ENCODE measurements at regions of chr11 and their contacts with region 1.

Region 1: DNA sequence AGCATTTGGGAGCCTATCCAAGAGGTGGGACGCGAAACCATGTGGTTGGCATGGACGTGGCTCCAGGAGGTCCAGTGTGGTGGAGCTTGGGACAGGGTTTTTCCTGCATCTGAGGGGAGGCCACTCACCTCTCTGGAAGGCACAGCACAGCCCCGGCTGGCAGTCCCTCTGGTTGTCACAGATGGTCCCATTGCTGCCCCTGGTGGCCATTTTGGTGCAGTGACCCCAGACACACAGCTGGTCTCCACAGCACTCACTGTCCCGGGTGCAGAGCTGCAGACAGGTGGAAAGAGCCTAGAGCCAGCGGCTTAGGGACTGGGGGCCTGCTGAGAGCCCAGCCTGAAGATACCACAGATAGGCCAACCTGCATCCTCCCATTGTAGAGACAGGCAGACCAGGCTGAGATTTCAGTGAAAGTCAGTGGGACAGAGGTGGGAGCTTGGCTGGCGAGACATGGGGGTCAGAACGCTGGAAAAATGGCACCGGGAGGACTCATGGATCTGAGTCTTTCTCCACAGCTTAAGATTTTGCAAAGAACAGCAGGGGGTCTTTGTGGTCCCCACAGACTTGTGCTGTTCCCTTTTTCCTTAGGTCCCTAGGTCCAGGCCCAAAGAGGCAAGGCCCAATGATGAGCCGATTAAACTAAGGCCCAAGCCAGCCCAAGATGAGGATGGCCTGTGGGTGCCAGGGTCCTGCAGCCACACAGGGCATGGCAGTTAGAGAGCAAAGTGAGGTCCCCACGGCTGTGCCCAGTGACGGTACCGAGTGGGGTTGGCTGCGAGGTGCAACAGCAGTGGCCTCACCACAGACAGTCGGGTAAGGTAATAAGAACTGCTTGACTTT is 41.4 kb downstream of the DKK3 start:
- DNase-seq: peak in 1 of 2 donors; percentile 87
- H3K4me3 ChIP-seq: no peak overlapping the region
- H3K27ac ChIP-seq: no peak overlapping the region
- H3K4me1 ChIP-seq: peaks cover 2 to 31% of the 10 kb centered on the region in 2 donors
- H3K27me3 ChIP-seq: no peaks in the 10 kb centered on the region
- CTCF ChIP-seq: peak; percentile 66 to 78 (median 67)

Region 2: DNA sequence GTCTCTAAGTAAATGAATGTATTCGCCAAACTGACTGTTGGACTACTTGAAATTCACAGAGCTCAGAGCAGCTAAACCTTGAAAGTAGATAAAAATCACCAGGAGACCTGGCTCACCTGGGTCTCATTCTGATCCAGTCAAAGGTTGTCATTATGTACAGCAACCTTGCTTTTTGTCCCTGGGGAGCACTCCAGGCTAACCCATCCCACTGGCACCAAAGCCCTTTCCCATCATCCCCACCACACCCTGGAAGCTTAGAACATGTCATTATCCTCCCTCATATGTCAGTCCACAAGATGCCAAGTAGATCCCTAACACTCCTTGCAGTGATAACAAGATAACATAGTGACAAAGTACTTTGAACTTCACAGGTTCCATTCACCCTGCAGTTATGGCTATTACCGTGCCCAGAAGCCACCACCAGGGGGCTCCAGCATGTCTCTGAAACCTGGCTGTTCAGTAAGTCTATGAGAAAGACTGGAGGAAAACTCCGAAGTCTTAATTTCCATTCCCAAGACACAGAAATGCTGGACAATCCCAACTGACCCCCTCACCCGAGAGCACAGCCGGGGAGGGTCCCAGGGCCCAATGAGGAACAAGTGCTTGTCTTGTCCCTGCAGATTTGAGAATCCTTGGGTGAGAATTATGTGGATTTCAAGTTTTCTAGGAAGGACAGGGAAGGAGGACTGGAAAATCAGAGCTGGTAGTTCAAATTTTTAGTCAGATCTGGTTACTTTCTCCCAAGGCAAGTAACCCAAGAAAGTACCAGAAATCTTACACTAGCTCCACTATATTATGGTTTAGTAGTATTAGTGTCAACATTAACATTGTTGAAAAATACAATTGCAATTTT is 168.2 kb before region 1 on chr11:
- intact Hi-C with region 1: no loop called
- DNase-seq: peak; percentile 51 to 93
- H3K4me3 ChIP-seq: no peak overlapping the region
- H3K27ac ChIP-seq: no peak overlapping the region
- H3K4me1 ChIP-seq: peaks cover 2 to 3% of the 10 kb centered on the region in 2 donors
- H3K27me3 ChIP-seq: no peaks in the 10 kb centered on the region
- CTCF ChIP-seq: peak; percentile 77 to 89 (median 80)

Region 3: GRCh38 chr11:11931461-11932055 is 35.5 kb before region 1 on chr11:
- intact Hi-C with region 1: loop called (anchors 5 kb)
- DNase-seq: no peak
- H3K4me3 ChIP-seq: no peak overlapping the region
- H3K27ac ChIP-seq: no peak overlapping the region
- H3K4me1 ChIP-seq: no peaks in the 10 kb centered on the region
- H3K27me3 ChIP-seq: no peaks in the 10 kb centered on the region
- CTCF ChIP-seq: peak; percentile 69 to 74 (median 71)

Region 4: DNA sequence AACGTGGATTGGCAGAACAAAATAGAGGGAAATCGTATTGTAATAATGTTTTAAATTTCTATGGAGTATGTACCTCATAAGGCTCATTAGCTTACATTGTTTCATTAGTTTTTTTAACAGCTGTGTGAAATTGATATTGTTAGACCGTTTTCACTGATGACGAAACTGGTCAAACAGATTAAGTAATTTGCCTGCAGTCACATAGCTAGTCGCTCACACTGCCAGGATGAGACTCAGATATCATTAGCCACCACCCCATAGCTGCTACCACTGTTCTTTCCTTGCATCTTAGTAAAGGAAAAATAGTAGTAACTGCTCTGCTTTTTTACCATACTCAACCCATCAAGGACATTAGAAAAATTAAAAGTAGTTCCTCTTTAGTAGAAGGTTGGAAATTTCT is 22.6 kb before region 1 on chr11:
- intact Hi-C with region 1: no loop called
- DNase-seq: no peak
- H3K4me3 ChIP-seq: no peak overlapping the region
- H3K27ac ChIP-seq: no peak overlapping the region
- H3K4me1 ChIP-seq: no peaks in the 10 kb centered on the region
- H3K27me3 ChIP-seq: no peaks in the 10 kb centered on the region
- CTCF ChIP-seq: no peak

Region 5: DNA sequence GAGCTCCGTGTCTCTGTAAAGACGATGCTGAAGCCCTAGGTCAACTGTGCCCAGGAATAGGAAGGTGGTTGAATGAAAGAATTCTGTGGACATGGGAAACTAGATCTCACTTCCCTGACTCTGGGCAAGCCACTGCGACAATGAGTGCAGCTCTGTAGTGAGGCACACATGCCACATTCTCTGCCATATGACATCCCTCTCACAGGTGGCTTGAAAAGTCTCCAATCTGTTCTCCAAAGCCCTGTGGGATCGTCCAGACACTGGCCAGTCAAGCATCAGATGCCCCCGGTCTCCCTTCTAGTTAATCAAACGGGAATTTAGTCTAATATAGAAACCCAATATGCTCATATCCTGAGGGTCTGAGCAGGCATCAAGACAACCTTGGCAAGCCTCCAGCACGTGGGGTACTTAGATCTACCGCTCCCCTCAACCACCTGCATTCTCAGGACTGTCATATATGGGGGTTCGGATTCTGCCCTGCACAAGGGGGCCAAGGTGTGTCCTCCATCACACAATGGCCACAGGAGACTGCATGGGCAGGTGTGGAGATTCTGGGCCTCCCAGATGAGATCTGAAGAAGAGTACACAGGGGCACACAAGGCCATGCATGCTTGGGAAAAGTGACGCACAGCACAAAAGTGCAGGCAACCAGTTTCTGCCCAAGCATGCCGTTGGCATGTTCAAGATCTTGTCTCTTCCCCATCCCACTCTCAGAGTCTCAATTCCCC is 29.4 kb after region 1 on chr11:
- intact Hi-C with region 1: loop called (anchors 2 kb)
- DNase-seq: peak in 1 of 2 donors; percentile 61
- H3K4me3 ChIP-seq: no peak overlapping the region
- H3K27ac ChIP-seq: peak overlapping the region; percentile 57 to 67
- H3K4me1 ChIP-seq: peaks cover 0 to 3% of the 10 kb centered on the region in 2 donors
- H3K27me3 ChIP-seq: no peaks in the 10 kb centered on the region
- CTCF ChIP-seq: no peak

Region 6: DNA sequence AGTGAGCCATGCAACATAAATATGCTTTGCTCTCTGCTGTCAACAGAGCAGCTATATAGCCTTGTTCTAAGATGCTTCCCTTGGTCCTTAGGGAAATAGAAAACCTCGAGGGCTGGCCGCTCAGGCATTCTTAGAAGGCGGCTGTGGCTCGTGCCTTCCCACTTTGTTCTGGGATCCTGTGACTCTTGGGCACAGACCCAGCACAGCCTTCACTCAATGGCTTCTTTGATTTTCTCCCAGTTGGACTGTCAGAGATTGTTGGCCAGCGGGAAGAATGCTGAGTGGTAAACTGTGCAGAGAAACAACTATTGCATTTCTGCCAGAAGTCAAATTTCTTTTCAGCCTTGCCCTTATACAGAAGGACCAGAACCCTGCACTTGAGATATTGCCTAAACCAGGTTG is 133.8 kb after region 1 on chr11:
- intact Hi-C with region 1: no loop called
- DNase-seq: no peak
- H3K4me3 ChIP-seq: no peak overlapping the region
- H3K27ac ChIP-seq: no peak overlapping the region
- H3K4me1 ChIP-seq: peaks cover 0 to 15% of the 10 kb centered on the region in 2 donors
- H3K27me3 ChIP-seq: no peaks in the 10 kb centered on the region
- CTCF ChIP-seq: no peak

Region 7: DNA sequence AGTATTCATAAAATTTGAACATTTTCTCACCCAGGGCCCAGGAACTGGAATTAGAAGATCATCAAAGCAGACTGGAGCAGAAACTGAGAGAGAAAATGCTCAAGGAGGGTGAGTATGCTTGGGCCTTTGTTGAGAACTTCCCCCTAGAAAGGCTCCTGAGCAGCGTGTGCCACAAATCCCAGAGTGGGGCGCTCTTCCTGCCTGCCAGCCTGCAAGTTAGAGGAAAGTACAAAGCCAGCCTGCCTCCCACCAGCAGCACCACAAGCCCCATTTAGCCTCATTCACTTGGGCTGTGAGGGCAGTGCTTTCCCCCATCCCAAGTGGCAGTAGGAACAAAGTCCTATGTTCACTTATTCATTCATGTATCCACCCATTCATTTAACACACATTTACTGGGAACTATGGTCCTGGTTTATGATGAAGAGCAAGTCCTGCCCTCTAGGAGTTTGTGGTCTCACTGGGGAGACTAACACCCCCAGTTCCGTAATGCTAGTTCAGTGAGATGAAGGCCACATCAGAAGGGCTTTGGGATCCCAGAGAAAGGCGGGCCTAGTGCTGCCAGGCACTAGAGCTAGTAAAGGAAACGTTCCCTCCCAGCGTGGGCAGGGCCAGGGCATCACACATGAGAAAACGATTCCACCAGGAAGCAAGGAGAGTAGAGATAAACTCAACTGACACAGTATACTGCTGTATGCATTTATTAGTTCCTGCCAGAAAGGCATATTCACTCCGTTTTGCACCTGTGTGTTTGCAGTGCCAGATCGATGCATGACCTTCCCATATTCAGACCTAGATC is 387.9 kb after region 1 on chr11:
- intact Hi-C with region 1: no loop called
- DNase-seq: no peak
- H3K4me3 ChIP-seq: no peak overlapping the region
- H3K27ac ChIP-seq: no peak overlapping the region
- H3K4me1 ChIP-seq: no peaks in the 10 kb centered on the region
- H3K27me3 ChIP-seq: no peaks in the 10 kb centered on the region
- CTCF ChIP-seq: no peak

Measured in ascending aorta (tissue), 2 donors.